ENCODE measurements at regions of chr11 and their contacts with region 1.

Region 1: DNA sequence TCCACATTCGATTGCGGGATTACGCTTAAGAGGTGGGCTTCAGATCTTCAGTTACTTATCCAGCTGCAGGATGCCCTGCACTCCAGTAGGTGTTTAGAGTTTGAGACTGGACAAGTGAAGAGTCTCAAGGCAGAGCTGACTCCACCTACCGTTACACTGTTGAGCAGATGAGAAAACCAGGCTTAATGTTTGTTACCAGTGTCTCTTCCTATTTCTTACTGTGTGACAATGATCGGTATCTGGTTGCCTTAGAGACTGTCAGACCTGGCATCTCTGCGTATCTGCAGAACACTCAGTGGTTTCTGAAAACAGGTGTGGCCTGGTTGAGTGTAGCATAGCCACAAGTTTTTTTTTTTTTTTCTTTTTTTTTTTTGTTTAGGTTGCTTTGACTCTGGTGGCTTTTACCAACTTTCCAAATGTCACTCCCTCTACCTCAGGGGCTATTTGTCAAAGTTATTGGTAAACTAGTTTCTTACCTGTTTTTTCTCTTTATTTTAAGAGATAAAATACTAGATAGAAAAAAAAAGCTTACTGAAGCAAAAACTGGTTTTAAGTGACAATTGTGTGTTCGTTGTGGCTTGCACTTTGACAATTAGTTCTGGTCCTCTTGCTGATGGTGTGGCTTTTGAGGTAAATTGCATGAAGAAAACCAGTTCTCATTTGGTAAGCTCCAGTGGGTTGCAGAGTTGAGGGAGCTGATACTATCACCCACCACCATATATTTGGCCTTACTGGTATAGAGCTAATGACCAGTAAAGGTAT is 284.8 kb downstream of the ETS1 start:
- DNase-seq: peak; percentile 88 to 96 (median 94)
- H3K4me3 ChIP-seq: peak overlapping the region; percentile 54 to 77
- H3K4me3 Mint-ChIP-seq: peak overlapping the region; percentile 90 to 95 (median 92)
- H3K27ac ChIP-seq: peak overlapping the region; percentile 93
- H3K27ac Mint-ChIP-seq: peak overlapping the region; percentile 95 to 100 (median 98)
- H3K4me1 ChIP-seq: peaks cover 98% of the 10 kb centered on the region
- H3K4me1 Mint-ChIP-seq: peaks cover 72 to 97% (median 86%) of the 10 kb centered on the region in 4 donors
- H3K27me3 ChIP-seq: no peaks in the 10 kb centered on the region
- H3K27me3 Mint-ChIP-seq: no peaks in the 10 kb centered on the region

Region 2: DNA sequence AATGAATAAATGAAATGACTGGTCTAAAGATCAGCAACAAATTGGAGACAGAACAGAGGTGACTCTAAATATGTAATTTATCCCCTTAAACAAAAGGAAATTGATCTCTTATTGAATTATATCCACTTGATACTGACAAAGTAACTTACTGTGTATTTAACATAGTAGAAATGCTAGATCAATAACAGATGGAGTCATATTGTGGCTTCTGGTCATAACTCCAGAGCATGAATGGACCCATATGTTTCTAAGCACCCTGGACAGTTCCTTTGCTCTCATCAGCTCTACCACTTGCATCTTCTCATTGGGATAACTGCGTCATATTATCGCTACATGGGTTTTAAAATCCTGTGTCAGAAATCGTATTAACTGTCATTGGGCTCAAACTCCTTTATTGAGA is 62.4 kb after region 1 on chr11:
- CTCF ChIA-PET with region 1: interaction called, 3 read pairs
- POLR2A ChIA-PET with region 1: interaction called, 12 read pairs
- intact Hi-C with region 1: no loop called
- DNase-seq: peak in 1 of 5 donors; percentile 35
- H3K4me3 ChIP-seq: no peak overlapping the region
- H3K4me3 Mint-ChIP-seq: no peak overlapping the region
- H3K27ac ChIP-seq: no peak overlapping the region
- H3K27ac Mint-ChIP-seq: peak overlapping the region in 1 of 7 donors; percentile 12
- H3K4me1 ChIP-seq: peaks cover 19% of the 10 kb centered on the region
- H3K4me1 Mint-ChIP-seq: peaks cover 21 to 45% (median 29%) of the 10 kb centered on the region in 4 donors
- H3K27me3 ChIP-seq: no peaks in the 10 kb centered on the region
- H3K27me3 Mint-ChIP-seq: no peaks in the 10 kb centered on the region

Region 3: GRCh38 chr11:128458321-128458720 is 155.7 kb after region 1 on chr11:
- CTCF ChIA-PET with region 1: interaction called, 4 read pairs
- POLR2A ChIA-PET with region 1: interaction called, 651 read pairs
- intact Hi-C with region 1: no loop called
- DNase-seq: no peak
- H3K4me3 ChIP-seq: no peak overlapping the region
- H3K4me3 Mint-ChIP-seq: no peak overlapping the region
- H3K27ac ChIP-seq: no peak overlapping the region
- H3K27ac Mint-ChIP-seq: peak overlapping the region; percentile 5 to 57 (median 23)
- H3K4me1 ChIP-seq: peaks cover 74% of the 10 kb centered on the region
- H3K4me1 Mint-ChIP-seq: peaks cover 57 to 94% (median 76%) of the 10 kb centered on the region in 4 donors
- H3K27me3 ChIP-seq: no peaks in the 10 kb centered on the region
- H3K27me3 Mint-ChIP-seq: no peaks in the 10 kb centered on the region

Region 4: DNA sequence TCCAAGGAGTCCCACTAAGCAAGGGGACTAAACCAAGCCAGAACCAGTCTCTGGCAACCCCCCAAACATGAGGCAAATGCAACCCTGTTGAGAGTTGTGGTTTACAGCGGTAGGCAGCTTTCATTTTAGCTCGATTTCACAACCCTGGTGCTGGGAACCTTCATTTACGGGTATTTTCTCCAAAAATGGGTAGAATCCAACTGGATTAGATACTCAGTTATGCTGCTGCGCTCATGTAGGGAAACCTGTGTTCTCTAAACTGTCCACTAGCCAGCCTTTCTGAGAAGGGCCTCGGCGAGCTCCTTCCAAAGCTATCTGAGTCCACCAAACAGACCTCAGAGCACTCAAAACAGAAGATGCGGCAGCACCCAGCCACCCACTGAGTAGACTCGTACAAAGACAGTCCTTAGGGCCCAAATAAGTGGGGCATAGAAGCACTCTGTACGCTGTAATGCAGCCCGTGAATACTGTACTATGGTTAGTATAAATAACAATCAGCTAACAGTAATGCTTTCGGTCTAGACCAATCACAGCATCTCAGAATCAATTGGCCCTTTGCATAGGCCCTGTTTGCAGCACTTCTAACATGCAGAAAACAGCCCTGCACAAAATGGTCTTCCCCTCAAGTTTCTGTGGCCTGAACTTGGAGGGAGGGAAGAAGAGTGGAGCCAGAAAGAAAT is 180.0 kb after region 1 on chr11:
- CTCF ChIA-PET with region 1: interaction called, 13 read pairs
- POLR2A ChIA-PET with region 1: interaction called, 651 read pairs
- intact Hi-C with region 1: no loop called
- DNase-seq: peak; percentile 68 to 88 (median 72)
- H3K4me3 ChIP-seq: peak overlapping the region; percentile 27 to 47
- H3K4me3 Mint-ChIP-seq: peak overlapping the region; percentile 73 to 92 (median 81)
- H3K27ac ChIP-seq: peak overlapping the region; percentile 94
- H3K27ac Mint-ChIP-seq: peak overlapping the region; percentile 88 to 99 (median 99)
- H3K4me1 ChIP-seq: peaks cover 99% of the 10 kb centered on the region
- H3K4me1 Mint-ChIP-seq: peaks cover 86 to 98% (median 93%) of the 10 kb centered on the region in 4 donors
- H3K27me3 ChIP-seq: no peaks in the 10 kb centered on the region
- H3K27me3 Mint-ChIP-seq: no peaks in the 10 kb centered on the region

Region 5: DNA sequence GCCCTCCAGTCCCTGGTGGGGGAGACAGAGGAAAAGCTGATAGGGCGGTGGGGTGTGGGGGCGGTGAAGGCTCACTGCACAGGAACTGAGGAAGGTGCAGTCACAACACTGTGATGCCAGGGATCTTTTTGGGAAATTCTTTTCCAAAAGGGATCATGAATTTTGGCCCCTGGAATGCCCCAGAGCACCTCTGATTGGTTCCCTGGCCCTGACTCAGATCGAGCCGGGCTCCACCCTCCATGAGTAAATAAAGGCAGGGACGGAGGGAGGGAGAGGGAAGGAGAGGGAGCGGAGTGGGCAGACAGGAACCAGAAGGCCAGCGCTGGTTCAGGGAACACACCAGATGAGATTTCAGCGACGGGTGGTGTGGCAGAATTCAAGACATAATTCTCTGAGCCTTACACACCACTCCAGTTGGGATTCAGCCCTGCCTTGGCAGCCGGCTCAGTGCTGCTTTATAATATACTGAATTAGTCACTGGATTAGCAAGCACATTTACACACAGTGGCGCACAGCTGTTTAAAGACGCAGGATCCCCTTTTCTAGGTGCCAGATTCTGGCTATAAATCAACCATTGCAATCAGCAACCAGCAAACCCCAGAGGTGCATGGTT is 204.5 kb after region 1 on chr11:
- CTCF ChIA-PET with region 1: interaction called, 26 read pairs
- POLR2A ChIA-PET with region 1: interaction called, 888 read pairs
- intact Hi-C with region 1: no loop called
- DNase-seq: peak in 1 of 5 donors; percentile 77
- H3K4me3 ChIP-seq: peak overlapping the region; percentile 37 to 39
- H3K4me3 Mint-ChIP-seq: peak overlapping the region; percentile 81 to 100 (median 94)
- H3K27ac ChIP-seq: peak overlapping the region; percentile 89
- H3K27ac Mint-ChIP-seq: peak overlapping the region; percentile 92 to 99 (median 98)
- H3K4me1 ChIP-seq: peaks cover 100% of the 10 kb centered on the region
- H3K4me1 Mint-ChIP-seq: peaks cover 80 to 100% (median 89%) of the 10 kb centered on the region in 4 donors
- H3K27me3 ChIP-seq: no peaks in the 10 kb centered on the region
- H3K27me3 Mint-ChIP-seq: no peaks in the 10 kb centered on the region

Measured in CD4-positive, alpha-beta memory T cell (primary cell).